GM12878 (cell line): ENCODE measurements at regions of chr16 and their contacts with region 1.

Region 1: GRCh38 chr16:35449663-35450062 is 1990.3 kb downstream of the TP53TG3F start:
- DNase-seq: no peak
- ATAC-seq: no peak
- H3K4me3 ChIP-seq: no peak overlapping the region
- H3K27ac ChIP-seq: no peak overlapping the region
- H3K4me1 ChIP-seq: no peaks in the 10 kb centered on the region
- H3K27me3 ChIP-seq: no peaks in the 10 kb centered on the region
- CTCF ChIP-seq: no peak
- EP300 ChIP-seq: no peak
- POLR2A ChIP-seq: no peak
- RAD21 ChIP-seq: no peak

Region 2: GRCh38 chr16:34743103-34743502 is 706.6 kb before region 1 on chr16:
- CTCF ChIA-PET with region 1: no interaction called
- POLR2A ChIA-PET with region 1: no interaction called
- RAD21 ChIA-PET with region 1: no interaction called
- SMC1A ChIA-PET with region 1: no interaction called
- in situ Hi-C with region 1: no loop called
- intact Hi-C with region 1: no loop called
- DNase-seq: no peak
- ATAC-seq: no peak
- H3K4me3 ChIP-seq: no peak overlapping the region
- H3K27ac ChIP-seq: no peak overlapping the region
- H3K4me1 ChIP-seq: no peaks in the 10 kb centered on the region
- H3K27me3 ChIP-seq: no peaks in the 10 kb centered on the region
- CTCF ChIP-seq: no peak
- EP300 ChIP-seq: no peak
- POLR2A ChIP-seq: no peak
- RAD21 ChIP-seq: no peak

Region 3: GRCh38 chr16:35195173-35195863 is 254.3 kb before region 1 on chr16:
- CTCF ChIA-PET with region 1: no interaction called
- POLR2A ChIA-PET with region 1: no interaction called
- RAD21 ChIA-PET with region 1: no interaction called
- SMC1A ChIA-PET with region 1: no interaction called
- in situ Hi-C with region 1: no loop called
- intact Hi-C with region 1: no loop called
- DNase-seq: no peak
- ATAC-seq: no peak
- H3K4me3 ChIP-seq: no peak overlapping the region
- H3K27ac ChIP-seq: no peak overlapping the region
- H3K4me1 ChIP-seq: no peaks in the 10 kb centered on the region
- H3K27me3 ChIP-seq: no peaks in the 10 kb centered on the region
- CTCF ChIP-seq: no peak
- EP300 ChIP-seq: no peak
- POLR2A ChIP-seq: no peak
- RAD21 ChIP-seq: no peak

Region 4: DNA sequence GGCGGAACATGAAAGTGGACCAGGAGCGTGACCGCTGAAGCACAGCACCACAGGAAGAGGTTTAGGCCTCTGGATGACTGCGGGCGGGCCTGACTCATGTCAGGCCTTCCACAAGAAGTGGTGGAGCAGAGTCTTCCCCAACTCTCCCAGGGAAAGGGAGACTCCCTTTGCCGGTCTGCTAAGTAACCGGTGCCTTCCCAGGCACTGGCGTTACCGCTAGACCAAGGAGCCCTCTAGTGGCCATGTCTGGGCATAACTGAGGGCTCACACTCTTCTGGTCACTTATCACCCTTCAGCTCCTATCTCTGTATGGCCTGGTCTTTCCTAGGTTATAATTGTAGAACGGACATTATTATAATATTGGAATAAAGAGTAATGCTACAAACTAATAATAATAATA is 58.3 kb before region 1 on chr16:
- CTCF ChIA-PET with region 1: no interaction called
- POLR2A ChIA-PET with region 1: no interaction called
- RAD21 ChIA-PET with region 1: no interaction called
- SMC1A ChIA-PET with region 1: no interaction called
- in situ Hi-C with region 1: no loop called
- intact Hi-C with region 1: loop called (anchors 10 kb)
- DNase-seq: no peak
- ATAC-seq: peak; percentile 44; the same call in 1 of the 3 replicates
- H3K4me3 ChIP-seq: no peak overlapping the region
- H3K27ac ChIP-seq: no peak overlapping the region
- H3K4me1 ChIP-seq: no peaks in the 10 kb centered on the region
- H3K27me3 ChIP-seq: no peaks in the 10 kb centered on the region
- CTCF ChIP-seq: peak; percentile 51 to 73 (median 53)
- EP300 ChIP-seq: no peak
- POLR2A ChIP-seq: no peak
- RAD21 ChIP-seq: peak; percentile 53

Region 5: DNA sequence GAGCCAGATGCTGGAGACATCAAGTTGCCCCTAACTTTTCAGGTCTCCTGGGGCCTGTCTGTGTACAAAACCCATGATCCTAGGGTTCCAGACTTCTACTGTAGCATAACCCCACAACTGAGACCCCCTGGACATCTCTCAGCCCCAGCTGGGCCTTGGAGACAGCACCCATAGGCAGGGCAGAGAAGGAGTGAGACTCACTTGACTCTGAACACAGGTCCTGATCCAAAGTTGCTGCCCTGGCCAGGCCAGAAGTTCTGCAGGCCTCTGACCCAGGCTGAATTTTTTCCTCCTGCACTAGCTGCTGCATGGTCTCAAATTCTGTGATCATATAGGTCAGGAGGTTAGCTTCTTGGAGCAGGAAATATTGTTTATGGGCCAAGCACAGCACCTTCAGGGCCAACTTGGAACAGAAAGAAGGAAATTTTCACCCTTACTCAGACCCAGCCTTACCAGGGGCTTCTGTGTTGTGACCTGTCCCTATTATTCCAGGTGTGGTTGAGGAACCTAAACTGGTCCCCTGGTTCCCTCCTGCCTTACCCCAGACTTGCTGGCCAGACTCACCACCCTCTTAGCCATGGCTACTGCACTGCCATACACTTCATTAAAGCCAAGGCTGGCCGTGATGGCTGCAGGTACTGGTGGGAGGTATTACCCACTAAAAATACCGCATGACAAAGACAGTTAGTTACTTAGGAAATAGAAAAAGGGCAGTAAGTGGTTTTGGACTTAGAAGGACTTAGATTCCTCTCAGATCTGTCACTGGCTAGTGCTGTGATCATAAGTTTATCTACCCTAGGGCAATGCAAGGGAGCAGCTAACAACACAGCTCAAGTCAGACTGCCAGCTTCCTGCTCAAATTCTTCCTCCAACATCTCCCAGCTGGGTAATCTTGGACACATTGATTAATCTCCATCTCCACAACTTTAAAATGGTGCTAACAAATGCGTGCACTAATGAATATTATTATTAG is 189.9 kb after region 1 on chr16:
- CTCF ChIA-PET with region 1: no interaction called
- POLR2A ChIA-PET with region 1: no interaction called
- RAD21 ChIA-PET with region 1: no interaction called
- SMC1A ChIA-PET with region 1: no interaction called
- in situ Hi-C with region 1: no loop called
- intact Hi-C with region 1: no loop called
- DNase-seq: no peak
- ATAC-seq: no peak
- H3K4me3 ChIP-seq: no peak overlapping the region
- H3K27ac ChIP-seq: no peak overlapping the region
- H3K4me1 ChIP-seq: no peaks in the 10 kb centered on the region
- H3K27me3 ChIP-seq: no peaks in the 10 kb centered on the region
- CTCF ChIP-seq: no peak
- EP300 ChIP-seq: no peak
- POLR2A ChIP-seq: no peak
- RAD21 ChIP-seq: no peak

Region 6: DNA sequence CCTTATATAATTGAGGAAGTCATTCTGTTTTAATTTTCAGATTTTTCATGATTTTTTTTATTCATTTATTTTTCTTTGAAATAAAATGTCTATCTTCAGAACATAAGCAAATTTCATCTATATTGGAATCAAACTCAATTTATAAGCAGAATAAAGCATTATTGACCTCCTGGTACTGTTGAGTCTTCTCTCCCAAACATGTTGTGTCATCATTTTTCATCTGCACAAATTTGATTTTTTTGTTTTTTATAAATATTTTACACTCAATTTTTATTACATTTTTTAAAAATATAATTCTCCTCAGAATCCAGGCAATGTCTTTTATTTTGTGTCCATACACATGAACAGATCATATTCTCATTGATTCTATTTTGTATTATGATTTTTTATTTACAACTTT is 373.7 kb after region 1 on chr16:
- CTCF ChIA-PET with region 1: no interaction called
- POLR2A ChIA-PET with region 1: no interaction called
- RAD21 ChIA-PET with region 1: no interaction called
- SMC1A ChIA-PET with region 1: no interaction called
- in situ Hi-C with region 1: loop called (anchors 25 kb)
- intact Hi-C with region 1: no loop called
- DNase-seq: no peak
- ATAC-seq: no peak
- H3K4me3 ChIP-seq: no peak overlapping the region
- H3K27ac ChIP-seq: no peak overlapping the region
- H3K4me1 ChIP-seq: no peaks in the 10 kb centered on the region
- H3K27me3 ChIP-seq: no peaks in the 10 kb centered on the region
- CTCF ChIP-seq: no peak
- EP300 ChIP-seq: no peak
- POLR2A ChIP-seq: no peak
- RAD21 ChIP-seq: no peak